ENCODE measurements at regions of chr2 and their contacts with region 1.

Region 1: GRCh38 chr2:75608684-75609333 is 37.8 kb upstream of the MRPL19 start:
- DNase-seq: peak; percentile 38 to 66
- ATAC-seq: peak; percentile 79 to 92 (median 82)
- H3K4me3 ChIP-seq: peak overlapping the region; percentile 35
- H3K27ac ChIP-seq: no peak overlapping the region
- H3K4me1 ChIP-seq: no peaks in the 10 kb centered on the region
- H3K27me3 ChIP-seq: peaks cover 0 to 29% (median 1%) of the 10 kb centered on the region in 3 donors
- CTCF ChIP-seq: peak; percentile 85

Region 2: DNA sequence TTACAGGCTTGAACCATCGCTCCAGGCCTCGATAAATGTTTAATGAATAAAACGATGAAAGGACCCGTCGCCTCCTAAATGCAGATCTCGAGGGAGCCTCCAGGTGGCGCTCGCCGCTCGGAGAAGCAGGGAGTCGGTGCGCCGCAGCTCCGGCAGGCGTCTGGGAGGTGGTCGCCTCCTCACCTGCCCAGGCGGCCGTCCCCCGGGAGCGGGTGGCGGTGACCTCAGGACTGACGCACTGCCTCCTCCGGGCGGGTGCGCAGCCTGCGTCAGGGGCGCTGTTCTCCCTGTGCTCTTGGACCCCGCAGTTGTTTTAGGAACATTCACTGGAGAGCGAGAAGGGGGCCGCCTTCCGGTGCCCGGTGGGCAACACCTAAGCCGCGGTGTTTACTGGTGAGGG is 689.0 kb before region 1 on chr2:
- intact Hi-C with region 1: loop called (anchors 5 kb)
- DNase-seq: peak; percentile 64 to 81
- ATAC-seq: peak; percentile 69 to 84 (median 76)
- H3K4me3 ChIP-seq: peak overlapping the region; percentile 57
- H3K27ac ChIP-seq: no peak overlapping the region
- H3K4me1 ChIP-seq: no peaks in the 10 kb centered on the region
- H3K27me3 ChIP-seq: peaks cover 0 to 12% (median 3%) of the 10 kb centered on the region in 3 donors
- CTCF ChIP-seq: peak; percentile 85

Region 3: DNA sequence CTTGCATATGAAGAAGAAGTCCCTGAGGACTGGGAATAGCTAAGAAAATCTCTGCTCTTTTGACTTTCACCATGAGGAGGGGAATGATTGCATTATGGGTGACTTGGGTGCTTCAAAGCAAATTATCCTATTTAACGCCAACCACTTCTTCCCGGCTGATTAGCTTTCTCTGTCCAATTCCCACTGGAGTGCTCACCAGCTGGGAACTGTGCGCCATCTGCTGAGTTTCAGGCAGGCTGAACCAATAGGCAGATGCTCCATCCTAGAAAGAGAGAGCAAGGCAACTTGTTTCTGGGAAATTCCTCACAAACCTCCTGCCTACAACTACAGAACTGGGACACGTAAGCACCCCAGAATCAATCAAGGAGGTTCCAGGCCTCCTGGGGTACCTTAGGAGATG is 601.0 kb before region 1 on chr2:
- intact Hi-C with region 1: no loop called
- DNase-seq: no peak
- ATAC-seq: no peak
- H3K4me3 ChIP-seq: no peak overlapping the region
- H3K27ac ChIP-seq: no peak overlapping the region
- H3K4me1 ChIP-seq: no peaks in the 10 kb centered on the region
- H3K27me3 ChIP-seq: no peaks in the 10 kb centered on the region
- CTCF ChIP-seq: no peak

Region 4: GRCh38 chr2:75064691-75065396 is 544.0 kb before region 1 on chr2:
- intact Hi-C with region 1: loop called in 1 of 2 experiments (anchors 10 kb)
- DNase-seq: peak; percentile 32 to 67
- ATAC-seq: peak; percentile 46 to 73 (median 64)
- H3K4me3 ChIP-seq: no peak overlapping the region
- H3K27ac ChIP-seq: no peak overlapping the region
- H3K4me1 ChIP-seq: no peaks in the 10 kb centered on the region
- H3K27me3 ChIP-seq: peaks cover 0 to 2% (median 0%) of the 10 kb centered on the region in 3 donors
- CTCF ChIP-seq: peak; percentile 75

Region 5: GRCh38 chr2:75466708-75467311 is 142.0 kb before region 1 on chr2:
- intact Hi-C with region 1: loop called (anchors 5 to 10 kb)
- DNase-seq: no peak
- ATAC-seq: no peak
- H3K4me3 ChIP-seq: no peak overlapping the region
- H3K27ac ChIP-seq: no peak overlapping the region
- H3K4me1 ChIP-seq: no peaks in the 10 kb centered on the region
- H3K27me3 ChIP-seq: no peaks in the 10 kb centered on the region
- CTCF ChIP-seq: peak; percentile 3

Region 6: DNA sequence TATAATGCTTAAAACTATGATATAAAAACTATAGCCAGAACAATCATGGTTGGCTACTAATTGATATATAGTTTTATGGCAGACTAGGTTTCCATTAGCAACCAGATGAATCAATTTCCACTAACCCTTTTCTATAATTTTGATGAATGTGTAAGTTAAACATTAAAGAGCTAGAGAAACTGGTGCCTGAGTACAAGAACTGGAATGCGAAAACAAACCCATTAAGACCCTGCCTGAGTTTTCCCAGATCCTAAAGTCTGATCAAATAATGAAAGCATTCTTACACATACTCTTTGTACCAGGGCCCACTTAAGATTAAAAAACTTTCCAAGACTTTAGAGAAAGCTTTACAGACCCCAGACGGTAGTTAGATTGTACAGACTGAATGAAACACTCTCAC is 59.1 kb after region 1 on chr2:
- intact Hi-C with region 1: no loop called
- DNase-seq: no peak
- ATAC-seq: no peak
- H3K4me3 ChIP-seq: no peak overlapping the region
- H3K27ac ChIP-seq: no peak overlapping the region
- H3K4me1 ChIP-seq: no peaks in the 10 kb centered on the region
- H3K27me3 ChIP-seq: no peaks in the 10 kb centered on the region
- CTCF ChIP-seq: no peak